ENCODE measurements at regions of chrX and their contacts with region 1.

Region 1: GRCh38 chrX:46713672-46714490 is 45.0 kb downstream of the SLC9A7 start:
- DNase-seq: no peak
- H3K4me3 Mint-ChIP-seq: peak overlapping the region; percentile 33
- H3K27ac Mint-ChIP-seq: peak overlapping the region; percentile 78
- H3K4me1 Mint-ChIP-seq: peaks cover 57% of the 10 kb centered on the region
- H3K27me3 Mint-ChIP-seq: no peaks in the 10 kb centered on the region

Region 2: GRCh38 chrX:46637937-46638336 is 75.9 kb before region 1 on chrX:
- intact Hi-C with region 1: loop called (anchors 5 kb)
- DNase-seq: no peak
- H3K4me3 Mint-ChIP-seq: no peak overlapping the region
- H3K27ac Mint-ChIP-seq: no peak overlapping the region
- H3K4me1 Mint-ChIP-seq: peaks cover 22% of the 10 kb centered on the region
- H3K27me3 Mint-ChIP-seq: no peaks in the 10 kb centered on the region

Region 3: GRCh38 chrX:46758906-46759644 is 45.2 kb after region 1 on chrX and contains the start of gene SLC9A7:
- intact Hi-C with region 1: loop called (anchors 2 kb)
- DNase-seq: peak; percentile 94
- H3K4me3 Mint-ChIP-seq: peak within 1 kb of the TSS; percentile 99
- H3K27ac Mint-ChIP-seq: peak within 1 kb of the TSS; percentile 96
- H3K4me1 Mint-ChIP-seq: peaks cover 24% of the 10 kb centered on the region
- H3K27me3 Mint-ChIP-seq: peaks cover 4% of the 10 kb centered on the region
- total RNA-seq, gene SLC9A7: 37.7 and 43.8 TPM in 2 replicates

Measured in activated CD4-positive, alpha-beta T cell treated with anti-CD3 and anti-CD28 coated beads, Interleukin-2, amount 10 ng/mL, durations not matched to agents 24 days and 14 days (primary cell).